Activated CD4-positive, alpha-beta T cell treated with anti-CD3 and anti-CD28 coated beads, Interleukin-2, amount 10 ng/mL, durations not matched to agents 7 days and 5 days (primary cell): ENCODE measurements at regions of chr1 and their contacts with region 1.

Region 1: GRCh38 chr1:9629445-9630201 is 21.9 kb upstream of the PIK3CD start:
- DNase-seq: peak; percentile 86
- H3K4me3 Mint-ChIP-seq: peak overlapping the region; percentile 95
- H3K27ac Mint-ChIP-seq: peak overlapping the region; percentile 98
- H3K4me1 Mint-ChIP-seq: peaks cover 58% of the 10 kb centered on the region
- H3K27me3 Mint-ChIP-seq: peaks cover 1% of the 10 kb centered on the region

Region 2: GRCh38 chr1:9615316-9616063 is 14.1 kb before region 1 on chr1:
- CTCF ChIA-PET with region 1: interaction called, 18 read pairs
- POLR2A ChIA-PET with region 1: no interaction called
- DNase-seq: peak; percentile 72
- H3K4me3 Mint-ChIP-seq: no peak overlapping the region
- H3K27ac Mint-ChIP-seq: peak overlapping the region; percentile 25
- H3K4me1 Mint-ChIP-seq: no peaks in the 10 kb centered on the region
- H3K27me3 Mint-ChIP-seq: peaks cover 5% of the 10 kb centered on the region

Region 3: GRCh38 chr1:9651565-9652378 is 22.1 kb after region 1 on chr1 and contains the start of gene PIK3CD:
- CTCF ChIA-PET with region 1: interaction called, 81 read pairs
- POLR2A ChIA-PET with region 1: interaction called, 5 read pairs
- DNase-seq: peak; percentile 48
- H3K4me3 Mint-ChIP-seq: peak within 1 kb of the TSS; percentile 95
- H3K27ac Mint-ChIP-seq: peak within 1 kb of the TSS; percentile 98
- H3K4me1 Mint-ChIP-seq: peaks cover 63% of the 10 kb centered on the region
- H3K27me3 Mint-ChIP-seq: no peaks in the 10 kb centered on the region
- total RNA-seq, gene PIK3CD: 222 to 242 TPM

Region 4: GRCh38 chr1:9717193-9718005 is 87.8 kb after region 1 on chr1:
- CTCF ChIA-PET with region 1: interaction called, 78 read pairs
- POLR2A ChIA-PET with region 1: interaction called, 15 read pairs
- DNase-seq: peak; percentile 97
- H3K4me3 Mint-ChIP-seq: peak overlapping the region; percentile 79
- H3K27ac Mint-ChIP-seq: peak overlapping the region; percentile 97
- H3K4me1 Mint-ChIP-seq: peaks cover 78% of the 10 kb centered on the region
- H3K27me3 Mint-ChIP-seq: no peaks in the 10 kb centered on the region

Region 5: DNA sequence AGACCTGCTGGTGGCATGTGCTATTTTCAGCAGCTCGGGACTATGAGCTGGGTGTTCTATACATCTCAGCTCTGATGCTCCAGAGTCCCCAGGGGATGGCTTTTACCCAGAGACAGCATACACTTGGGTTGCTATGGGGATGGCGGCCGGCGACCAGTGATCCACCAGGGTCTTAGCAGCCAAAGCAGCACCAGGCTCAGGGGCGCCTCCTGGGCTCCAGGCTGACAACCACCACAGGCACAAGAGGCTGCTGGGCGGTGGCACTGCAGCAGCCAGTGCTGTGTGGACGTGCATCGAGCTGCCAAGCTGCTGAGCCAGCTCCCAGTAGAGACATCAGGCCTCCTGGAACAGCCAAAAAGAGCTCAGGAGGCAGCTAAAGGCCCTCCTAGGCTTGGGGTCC is 231.7 kb after region 1 on chr1:
- CTCF ChIA-PET with region 1: interaction called, 12 read pairs
- POLR2A ChIA-PET with region 1: no interaction called
- DNase-seq: no peak
- H3K4me3 Mint-ChIP-seq: no peak overlapping the region
- H3K27ac Mint-ChIP-seq: no peak overlapping the region
- H3K4me1 Mint-ChIP-seq: peaks cover 13% of the 10 kb centered on the region
- H3K27me3 Mint-ChIP-seq: no peaks in the 10 kb centered on the region